Breast epithelium (tissue), 4 donors: ENCODE measurements at regions of chr14 and their contacts with region 1.

Region 1: GRCh38 chr14:75995372-75996041 is 9.9 kb downstream of the IFT43 start:
- DNase-seq: no peak
- H3K4me3 ChIP-seq: peak overlapping the region in 2 of 3 donors; percentile 1 to 23
- H3K27ac ChIP-seq: peak overlapping the region; percentile 50 to 73
- H3K4me1 ChIP-seq: no peaks in the 10 kb centered on the region
- H3K27me3 ChIP-seq: no peaks in the 10 kb centered on the region
- CTCF ChIP-seq: no peak
- POLR2A ChIP-seq: no peak

Region 2: GRCh38 chr14:75258615-75259466 is 736.7 kb before region 1 on chr14:
- intact Hi-C with region 1: no loop called
- DNase-seq: peak; percentile 98 to 99
- H3K4me3 ChIP-seq: peak overlapping the region; percentile 28 to 66 (median 46)
- H3K27ac ChIP-seq: peak overlapping the region; percentile 99 to 100
- H3K4me1 ChIP-seq: peaks cover 0 to 6% of the 10 kb centered on the region in 2 donors
- H3K27me3 ChIP-seq: no peaks in the 10 kb centered on the region
- CTCF ChIP-seq: no peak
- POLR2A ChIP-seq: peak; percentile 76

Region 3: DNA sequence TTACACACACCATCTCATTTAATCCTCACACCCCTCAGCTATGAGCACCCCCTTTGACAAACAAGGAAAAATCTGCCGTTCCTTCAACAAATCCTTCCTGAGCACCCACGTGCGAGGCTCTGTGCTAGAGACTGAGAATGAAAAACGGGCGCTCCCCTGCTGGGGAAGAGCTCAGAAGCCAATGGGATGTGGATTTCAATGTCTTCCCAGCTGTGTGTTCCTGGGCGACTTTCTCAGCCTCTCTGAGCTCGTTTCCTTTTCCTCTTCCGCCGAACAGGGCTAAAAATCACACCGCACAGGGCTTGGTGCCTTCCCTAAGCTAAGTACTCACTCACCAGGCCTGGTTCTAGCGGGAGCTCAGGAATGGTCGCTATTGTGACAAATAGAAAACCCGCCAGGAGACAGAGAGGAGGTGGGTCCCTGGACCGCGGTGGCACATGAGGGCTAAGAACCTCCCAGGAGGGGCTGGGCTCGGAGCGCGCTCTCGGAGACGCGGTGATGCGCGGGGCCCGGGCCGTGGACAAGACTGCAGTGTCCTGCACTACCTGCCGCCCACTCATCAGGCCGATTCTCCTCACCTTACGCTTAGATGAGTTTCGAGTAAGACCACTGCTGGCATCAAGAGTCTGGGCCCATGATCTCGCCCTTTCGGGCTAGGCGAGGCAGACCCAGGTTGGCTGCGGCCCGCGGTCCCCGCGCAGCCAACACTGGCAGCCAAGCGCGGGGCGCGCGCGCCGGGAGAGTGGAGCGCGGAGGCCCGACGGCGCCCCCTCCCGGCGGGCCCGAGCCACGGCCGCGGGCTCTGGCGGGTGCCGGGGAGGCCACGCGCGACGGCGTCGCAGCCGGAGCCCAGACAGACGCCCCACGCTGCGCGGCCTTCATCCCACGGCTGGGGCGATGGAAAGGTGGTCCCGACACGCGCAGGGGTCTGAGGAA is 1129.1 kb after region 1 on chr14:
- intact Hi-C with region 1: loop called (anchors 5 kb)
- DNase-seq: no peak
- H3K4me3 ChIP-seq: peak overlapping the region; percentile 40 to 68 (median 48)
- H3K27ac ChIP-seq: peak overlapping the region in 1 of 2 donors; percentile 64
- H3K4me1 ChIP-seq: peaks cover 5 to 11% of the 10 kb centered on the region in 2 donors
- H3K27me3 ChIP-seq: no peaks in the 10 kb centered on the region
- CTCF ChIP-seq: peak in 1 of 3 donors; percentile 85
- POLR2A ChIP-seq: no peak